ENCODE measurements at regions of chr5 and their contacts with region 1.

Region 1: DNA sequence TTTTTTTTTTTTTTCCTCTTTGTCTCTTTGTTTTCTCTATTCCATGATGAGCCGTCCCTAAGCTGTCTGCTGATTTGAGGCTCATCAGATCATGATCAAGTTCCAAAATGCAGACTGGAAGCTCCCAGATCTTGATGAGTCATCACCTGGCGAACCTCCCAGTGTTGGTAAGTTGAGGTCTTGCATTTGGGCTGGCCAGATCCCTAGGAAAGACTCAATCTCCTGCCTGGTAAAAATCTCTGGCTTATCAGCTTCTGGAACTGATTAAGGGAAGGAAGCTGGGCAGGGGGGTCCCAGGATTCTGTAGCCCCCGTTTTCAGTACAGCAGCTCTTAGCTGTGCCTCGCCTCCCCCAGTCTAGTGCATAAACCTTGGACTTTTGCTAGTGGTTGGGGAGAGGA is 69.0 kb downstream of the TSPAN17 start:
- DNase-seq: no peak
- H3K4me3 ChIP-seq: no peak overlapping the region
- H3K27ac ChIP-seq: no peak overlapping the region
- H3K4me1 ChIP-seq: peaks cover 0 to 11% (median 5%) of the 10 kb centered on the region in 4 experiments; a peak in 4 of 7 replicates
- H3K27me3 ChIP-seq: no peaks in the 10 kb centered on the region; a peak in 2 of 7 replicates
- CTCF ChIP-seq: no peak
- EP300 ChIP-seq: no peak
- POLR2A ChIP-seq: no peak
- RAD21 ChIP-seq: no peak

Region 2: GRCh38 chr5:176733406-176734262 is 17.3 kb after region 1 on chr5:
- CTCF ChIA-PET with region 1: interaction called, 54 read pairs
- POLR2A ChIA-PET with region 1: interaction called, 4 read pairs
- DNase-seq: peak in 1 of 2 experiments; percentile 44
- H3K4me3 ChIP-seq: no peak overlapping the region
- H3K27ac ChIP-seq: no peak overlapping the region
- H3K4me1 ChIP-seq: peaks cover 0 to 11% (median 2%) of the 10 kb centered on the region in 4 experiments; a peak in 5 of 7 replicates
- H3K27me3 ChIP-seq: peaks cover 0 to 4% (median 2%) of the 10 kb centered on the region in 4 experiments; a peak in 3 of 7 replicates
- CTCF ChIP-seq: no peak
- EP300 ChIP-seq: no peak
- POLR2A ChIP-seq: no peak
- RAD21 ChIP-seq: no peak

Region 3: DNA sequence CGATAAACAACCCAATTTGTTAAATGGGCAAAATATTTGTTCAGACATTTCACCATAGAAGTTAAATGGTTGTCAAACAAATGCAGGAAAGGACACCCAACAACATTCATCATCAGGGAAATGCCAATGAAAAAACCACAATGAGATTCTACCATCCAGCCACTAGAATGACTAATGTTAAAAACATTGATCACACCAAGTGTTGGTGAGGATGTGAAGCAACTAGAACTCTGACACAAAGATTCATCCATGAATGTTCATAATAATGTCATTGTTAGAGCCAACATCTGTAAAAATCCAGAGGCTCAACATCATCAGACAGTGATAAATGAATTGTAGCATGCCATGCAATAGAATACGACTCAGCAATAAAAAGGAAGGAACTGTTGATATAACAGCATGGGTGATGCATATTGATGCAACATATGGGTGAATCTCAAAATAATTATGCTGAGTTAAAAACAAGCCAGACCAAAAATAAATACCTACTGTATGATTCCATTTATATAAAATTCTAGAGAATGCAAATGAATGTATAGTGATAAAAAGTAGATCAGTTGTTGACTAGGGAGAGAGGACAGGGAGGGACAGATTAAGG is 38.2 kb after region 1 on chr5:
- CTCF ChIA-PET with region 1: no interaction called
- POLR2A ChIA-PET with region 1: no interaction called
- DNase-seq: no peak
- H3K4me3 ChIP-seq: no peak overlapping the region
- H3K27ac ChIP-seq: no peak overlapping the region
- H3K4me1 ChIP-seq: no peaks in the 10 kb centered on the region
- H3K27me3 ChIP-seq: no peaks in the 10 kb centered on the region
- CTCF ChIP-seq: no peak
- EP300 ChIP-seq: no peak
- POLR2A ChIP-seq: no peak
- RAD21 ChIP-seq: no peak